CD8-positive, alpha-beta memory T cell (primary cell): ENCODE measurements at regions of chr2 and their contacts with region 1.

Region 1: GRCh38 chr2:96407041-96407918 is 71.7 kb downstream of the NCAPH start:
- DNase-seq: peak; percentile 58 to 90 (median 84)
- H3K4me3 ChIP-seq: peak overlapping the region; percentile 33
- H3K4me3 Mint-ChIP-seq: peak overlapping the region; percentile 3 to 82 (median 72)
- H3K27ac ChIP-seq: peak overlapping the region; percentile 13
- H3K27ac Mint-ChIP-seq: peak overlapping the region; percentile 83 to 100 (median 94)
- H3K4me1 ChIP-seq: peaks cover 30% of the 10 kb centered on the region
- H3K4me1 Mint-ChIP-seq: peaks cover 29 to 41% (median 38%) of the 10 kb centered on the region in 3 donors
- H3K27me3 ChIP-seq: no peaks in the 10 kb centered on the region
- H3K27me3 Mint-ChIP-seq: no peaks in the 10 kb centered on the region

Region 2: DNA sequence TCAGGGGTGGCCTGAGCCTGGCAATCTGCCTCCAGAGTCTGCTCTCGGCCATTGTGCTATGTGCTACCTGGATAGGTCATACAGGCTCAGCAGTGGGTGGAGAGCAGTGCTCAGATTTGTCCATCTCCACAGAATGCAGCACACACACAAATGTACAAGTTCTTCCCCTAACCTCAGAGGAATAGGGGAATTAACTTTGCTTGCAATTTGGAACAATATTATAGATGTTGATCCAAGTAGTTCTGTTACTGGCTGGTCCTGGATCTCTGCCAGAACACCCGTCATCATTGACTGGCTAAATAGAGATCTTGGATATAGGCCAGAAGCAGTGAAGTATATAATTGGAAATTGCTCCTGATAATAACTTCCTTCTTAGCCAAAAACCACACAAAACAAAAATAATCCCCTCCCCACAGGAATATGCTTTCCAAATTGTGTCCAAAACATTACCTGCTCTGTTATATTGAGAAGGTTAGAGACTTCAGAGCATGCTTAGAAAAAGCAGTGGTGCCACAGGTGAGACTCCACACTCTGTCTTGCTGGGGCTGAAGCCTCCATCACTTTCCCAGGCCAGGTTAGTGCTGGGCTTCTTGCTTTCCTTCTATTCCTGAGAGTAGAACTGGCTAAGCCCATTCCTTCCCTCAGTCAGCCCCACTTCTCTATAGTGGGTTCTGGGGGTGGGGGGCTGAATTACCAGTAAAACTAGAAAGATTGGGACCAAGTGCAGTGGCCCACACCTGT is 32.9 kb before region 1 on chr2:
- CTCF ChIA-PET with region 1: no interaction called
- POLR2A ChIA-PET with region 1: no interaction called
- DNase-seq: no peak
- H3K4me3 ChIP-seq: no peak overlapping the region
- H3K4me3 Mint-ChIP-seq: no peak overlapping the region
- H3K27ac ChIP-seq: no peak overlapping the region
- H3K27ac Mint-ChIP-seq: no peak overlapping the region
- H3K4me1 ChIP-seq: no peaks in the 10 kb centered on the region
- H3K4me1 Mint-ChIP-seq: no peaks in the 10 kb centered on the region
- H3K27me3 ChIP-seq: no peaks in the 10 kb centered on the region
- H3K27me3 Mint-ChIP-seq: peaks cover 2 to 4% of the 10 kb centered on the region in 2 donors

Region 3: GRCh38 chr2:96396095-96396494 is 11.2 kb before region 1 on chr2:
- CTCF ChIA-PET with region 1: interaction called, 11 read pairs
- POLR2A ChIA-PET with region 1: no interaction called
- DNase-seq: no peak
- H3K4me3 ChIP-seq: no peak overlapping the region
- H3K4me3 Mint-ChIP-seq: no peak overlapping the region
- H3K27ac ChIP-seq: no peak overlapping the region
- H3K27ac Mint-ChIP-seq: no peak overlapping the region
- H3K4me1 ChIP-seq: no peaks in the 10 kb centered on the region
- H3K4me1 Mint-ChIP-seq: peaks cover 0 to 5% (median 4%) of the 10 kb centered on the region in 3 donors
- H3K27me3 ChIP-seq: no peaks in the 10 kb centered on the region
- H3K27me3 Mint-ChIP-seq: peaks cover 4 to 13% of the 10 kb centered on the region in 2 donors

Region 4: DNA sequence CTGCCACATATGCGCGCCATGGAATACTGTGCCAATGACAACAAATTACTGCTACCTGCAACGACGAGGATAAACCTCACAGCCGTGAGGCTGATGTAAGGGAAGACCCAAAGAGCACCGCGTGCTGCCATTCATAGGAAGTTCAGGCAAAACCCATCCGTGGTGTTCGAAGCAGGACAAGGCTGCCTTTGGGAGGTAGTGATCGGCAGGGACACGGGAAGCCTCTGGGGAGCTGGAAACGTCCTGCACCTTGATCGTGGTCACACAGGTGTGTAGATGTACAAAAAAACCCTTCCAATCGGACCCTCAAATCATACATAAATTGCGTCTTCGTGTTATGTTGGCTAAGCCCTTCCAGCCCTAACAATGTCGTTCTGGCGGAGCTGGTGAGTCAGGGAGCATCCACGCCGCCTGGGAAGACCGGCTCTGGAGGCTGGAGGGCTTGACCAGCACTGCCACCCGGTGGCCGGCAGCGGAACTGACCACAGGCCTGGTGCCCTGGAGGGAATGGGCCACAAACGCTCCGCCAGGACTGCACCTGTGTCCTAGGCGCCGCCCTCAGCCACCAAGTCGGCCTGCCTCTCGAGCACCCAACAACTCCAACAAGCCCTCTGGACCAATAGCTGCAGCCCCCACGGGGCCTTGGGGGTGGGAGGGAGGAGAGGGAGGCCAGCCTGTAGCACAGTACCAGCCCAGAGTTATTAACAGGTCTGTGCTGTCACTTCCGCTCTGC is 102.0 kb after region 1 on chr2:
- CTCF ChIA-PET with region 1: interaction called, 59 read pairs
- POLR2A ChIA-PET with region 1: no interaction called
- DNase-seq: peak in 4 of 5 donors; percentile 21 to 64 (median 31)
- H3K4me3 ChIP-seq: no peak overlapping the region
- H3K4me3 Mint-ChIP-seq: peak overlapping the region in 2 of 7 donors; percentile 40 to 58
- H3K27ac ChIP-seq: no peak overlapping the region
- H3K27ac Mint-ChIP-seq: peak overlapping the region in 2 of 8 donors; percentile 26 to 35
- H3K4me1 ChIP-seq: peaks cover 11% of the 10 kb centered on the region
- H3K4me1 Mint-ChIP-seq: peaks cover 8 to 21% (median 13%) of the 10 kb centered on the region in 3 donors
- H3K27me3 ChIP-seq: peaks cover 4% of the 10 kb centered on the region
- H3K27me3 Mint-ChIP-seq: peaks cover 7 to 15% of the 10 kb centered on the region in 2 donors

Region 5: GRCh38 chr2:96527286-96528005 is 120.2 kb after region 1 on chr2:
- CTCF ChIA-PET with region 1: interaction called, 13 read pairs
- POLR2A ChIA-PET with region 1: interaction called, 3 read pairs
- DNase-seq: peak; percentile 45 to 70 (median 49)
- H3K4me3 ChIP-seq: peak overlapping the region; percentile 60
- H3K4me3 Mint-ChIP-seq: peak overlapping the region; percentile 39 to 90 (median 79)
- H3K27ac ChIP-seq: peak overlapping the region; percentile 39
- H3K27ac Mint-ChIP-seq: peak overlapping the region in 7 of 8 donors; percentile 5 to 90 (median 86)
- H3K4me1 ChIP-seq: peaks cover 58% of the 10 kb centered on the region
- H3K4me1 Mint-ChIP-seq: peaks cover 46 to 80% (median 59%) of the 10 kb centered on the region in 3 donors
- H3K27me3 ChIP-seq: no peaks in the 10 kb centered on the region
- H3K27me3 Mint-ChIP-seq: no peaks in the 10 kb centered on the region

Region 6: DNA sequence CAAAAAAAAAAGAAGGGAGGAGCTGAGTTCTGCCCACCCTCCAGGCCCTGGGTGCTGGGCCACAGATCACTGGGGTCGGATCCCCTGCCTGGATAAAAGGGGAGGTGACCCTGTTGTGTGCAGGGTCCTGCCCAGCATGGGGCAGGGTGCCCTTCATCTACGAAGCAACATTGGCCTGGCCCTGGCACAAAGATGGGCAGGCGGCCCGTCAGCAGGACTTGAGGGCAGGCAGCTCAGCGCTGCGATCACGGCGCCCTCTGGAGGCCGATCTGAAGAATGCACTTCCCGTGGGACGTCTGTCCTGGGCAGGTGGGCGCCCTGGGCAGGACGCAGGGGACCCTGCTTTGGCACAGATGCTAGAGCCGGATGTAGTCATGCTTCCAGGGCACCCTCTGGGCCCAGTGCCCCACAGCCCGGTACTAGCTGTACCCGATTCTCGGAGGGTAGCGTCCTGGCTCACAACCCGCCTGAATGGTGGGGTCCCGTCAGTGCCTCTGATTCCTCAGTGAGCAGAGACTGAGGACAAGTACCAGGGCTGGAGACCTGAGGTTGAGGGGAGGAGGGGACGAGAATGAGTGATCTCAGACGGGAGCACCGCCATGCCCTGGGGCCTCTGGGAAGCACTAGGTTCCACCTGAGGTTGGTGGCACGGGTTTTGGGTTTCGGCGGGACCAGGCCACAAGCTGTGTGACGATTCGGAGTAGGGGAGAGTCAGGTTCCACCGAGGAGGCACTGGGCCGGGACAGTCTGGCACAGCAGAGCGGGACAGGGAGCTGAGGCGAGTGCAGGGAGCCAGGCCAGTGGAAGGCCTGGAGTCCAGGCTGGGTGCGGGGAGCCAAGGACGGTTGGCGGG is 147.2 kb after region 1 on chr2:
- CTCF ChIA-PET with region 1: interaction called, 46 read pairs
- POLR2A ChIA-PET with region 1: interaction called, 12 read pairs
- DNase-seq: peak; percentile 59 to 81 (median 67)
- H3K4me3 ChIP-seq: no peak overlapping the region
- H3K4me3 Mint-ChIP-seq: peak overlapping the region in 4 of 7 donors; percentile 13 to 61 (median 32)
- H3K27ac ChIP-seq: no peak overlapping the region
- H3K27ac Mint-ChIP-seq: peak overlapping the region in 6 of 8 donors; percentile 32 to 94 (median 57)
- H3K4me1 ChIP-seq: peaks cover 12% of the 10 kb centered on the region
- H3K4me1 Mint-ChIP-seq: peaks cover 15 to 37% (median 19%) of the 10 kb centered on the region in 3 donors
- H3K27me3 ChIP-seq: no peaks in the 10 kb centered on the region
- H3K27me3 Mint-ChIP-seq: no peaks in the 10 kb centered on the region

Region 7: DNA sequence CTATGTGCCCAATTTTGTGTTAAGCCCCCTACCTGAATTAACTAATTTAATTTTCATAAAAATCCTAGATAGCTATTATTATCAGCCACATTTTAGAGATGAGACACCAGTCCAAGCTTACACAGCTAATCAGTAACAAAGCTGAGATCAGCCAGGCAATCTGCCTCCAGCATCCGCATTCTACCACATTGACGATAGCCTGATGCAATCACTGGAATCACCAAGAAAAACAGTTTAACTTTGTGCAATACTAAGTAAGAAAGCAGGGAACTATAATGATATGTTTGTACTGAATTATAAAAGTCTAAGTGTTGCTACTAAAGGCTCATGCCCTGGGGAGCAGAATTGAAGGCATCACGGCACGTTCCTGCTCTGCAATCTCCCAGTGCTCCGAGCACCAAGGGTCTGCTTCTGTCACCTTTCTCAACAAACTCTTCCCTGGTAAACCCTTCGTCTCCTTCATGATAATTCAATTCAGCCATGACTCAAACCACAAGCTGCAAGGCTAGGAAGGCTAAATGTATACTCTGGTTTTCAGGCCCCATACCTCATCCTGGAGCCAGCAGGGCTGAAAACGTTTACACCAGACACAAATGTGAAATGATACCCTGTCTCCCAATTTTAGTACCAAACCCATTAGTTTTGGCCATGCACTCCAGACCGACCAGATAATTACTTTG is 211.5 kb after region 1 on chr2:
- CTCF ChIA-PET with region 1: no interaction called
- POLR2A ChIA-PET with region 1: no interaction called
- DNase-seq: no peak
- H3K4me3 ChIP-seq: no peak overlapping the region
- H3K4me3 Mint-ChIP-seq: no peak overlapping the region
- H3K27ac ChIP-seq: no peak overlapping the region
- H3K27ac Mint-ChIP-seq: peak overlapping the region in 4 of 8 donors; percentile 1 to 86 (median 58)
- H3K4me1 ChIP-seq: peaks cover 6% of the 10 kb centered on the region
- H3K4me1 Mint-ChIP-seq: peaks cover 29 to 55% (median 38%) of the 10 kb centered on the region in 3 donors
- H3K27me3 ChIP-seq: no peaks in the 10 kb centered on the region
- H3K27me3 Mint-ChIP-seq: no peaks in the 10 kb centered on the region